Left cardiac atrium (tissue), 4 donors: ENCODE measurements at regions of chr12 and their contacts with region 1.

Region 1: GRCh38 chr12:98516184-98516873 is 939 bp downstream of the TMPO start:
- DNase-seq: peak; percentile 77
- ATAC-seq: peak; percentile 65 to 66

Region 2: GRCh38 chr12:98424726-98425401 is 91.5 kb before region 1 on chr12:
- intact Hi-C with region 1: loop called (anchors 5 to 10 kb)
- DNase-seq: peak; percentile 60
- ATAC-seq: peak; percentile 70 to 76

Region 3: GRCh38 chr12:98490501-98491453 is 25.6 kb before region 1 on chr12:
- intact Hi-C with region 1: loop called in 1 of 2 experiments (anchors 2 kb)
- DNase-seq: peak; percentile 85
- ATAC-seq: peak; percentile 89 to 93

Region 4: GRCh38 chr12:98503592-98504367 is 12.5 kb before region 1 on chr12:
- intact Hi-C with region 1: loop called in 1 of 2 experiments (anchors 1 kb)
- DNase-seq: peak; percentile 96
- ATAC-seq: peak; percentile 92 to 94

Region 5: DNA sequence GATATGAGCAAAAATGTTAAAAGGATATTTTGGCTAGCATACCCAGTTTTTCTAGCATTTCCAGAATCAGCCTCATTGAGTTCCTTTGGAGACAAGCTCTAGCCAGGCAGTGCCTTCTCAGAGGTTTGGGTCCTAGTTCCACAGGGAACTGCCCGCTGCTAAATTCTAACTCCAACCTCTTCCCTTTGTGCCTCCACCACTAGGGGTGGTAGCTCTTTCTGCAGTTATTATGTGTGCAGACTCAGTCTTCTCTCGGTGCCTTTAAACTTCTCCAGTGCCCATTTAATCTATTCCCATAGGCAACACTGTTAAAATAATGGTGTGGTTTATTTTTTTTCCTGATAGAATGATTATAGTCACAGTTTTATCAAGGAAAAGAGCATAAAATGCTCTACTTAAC is 55.7 kb after region 1 on chr12:
- intact Hi-C with region 1: no loop called
- DNase-seq: no peak
- ATAC-seq: no peak

Region 6: GRCh38 chr12:98612696-98613334 is 96.5 kb after region 1 on chr12:
- intact Hi-C with region 1: no loop called
- DNase-seq: no peak
- ATAC-seq: no peak